ENCODE measurements at regions of chr12 and their contacts with region 1.

Region 1: GRCh38 chr12:56189176-56189917 is at the start of gene SMARCC2:
- DNase-seq: peak; percentile 91
- H3K27ac ChIP-seq: peak within 1 kb of the TSS; percentile 96
- CTCF ChIP-seq: peak; percentile 99

Region 2: GRCh38 chr12:56117778-56118687 is 71.3 kb before region 1 on chr12 and contains the start of gene ZC3H10:
- CTCF ChIA-PET with region 1: interaction called, 36 read pairs
- POLR2A ChIA-PET with region 1: interaction called, 3 read pairs
- DNase-seq: peak; percentile 96
- H3K27ac ChIP-seq: peak within 1 kb of the TSS; percentile 92
- CTCF ChIP-seq: peak; percentile 50

Region 3: DNA sequence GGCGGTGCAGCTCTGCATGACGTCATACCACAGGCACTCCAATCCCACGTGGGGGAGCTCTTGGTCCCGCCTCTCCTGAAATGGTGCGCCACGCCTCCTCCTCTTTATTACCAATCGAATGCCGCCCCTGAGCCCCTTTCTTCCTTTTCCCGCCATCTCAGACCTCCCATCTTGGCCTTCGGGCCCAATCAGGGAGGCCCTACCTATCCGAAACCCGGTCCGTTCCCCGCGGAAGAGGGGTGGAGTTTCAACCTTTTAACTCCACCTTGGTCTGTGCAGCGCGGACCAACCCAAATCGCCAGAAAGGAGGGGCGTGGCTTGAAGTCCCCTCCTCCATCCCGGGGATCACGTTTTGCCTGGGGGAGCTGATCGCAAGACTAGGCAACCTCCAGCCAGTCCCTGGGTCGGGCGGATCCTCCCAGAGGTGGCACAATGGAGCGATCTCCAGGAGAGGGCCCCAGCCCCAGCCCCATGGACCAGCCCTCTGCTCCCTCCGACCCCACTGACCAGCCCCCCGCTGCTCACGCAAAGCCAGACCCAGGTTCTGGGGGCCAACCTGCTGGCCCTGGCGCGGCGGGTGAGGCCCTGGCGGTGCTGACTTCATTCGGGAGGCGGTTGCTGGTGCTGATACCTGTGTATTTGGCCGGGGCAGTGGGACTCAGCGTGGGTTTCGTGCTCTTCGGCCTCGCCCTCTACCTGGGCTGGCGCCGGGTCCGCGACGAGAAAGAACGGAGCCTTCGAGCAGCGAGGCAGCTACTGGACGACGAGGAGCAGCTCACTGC is 61.3 kb before region 1 on chr12 and contains the start of gene ESYT1:
- CTCF ChIA-PET with region 1: interaction called, 21 read pairs
- POLR2A ChIA-PET with region 1: interaction called, 4 read pairs
- DNase-seq: peak; percentile 99
- H3K27ac ChIP-seq: peak within 1 kb of the TSS; percentile 91
- CTCF ChIP-seq: no peak

Region 4: DNA sequence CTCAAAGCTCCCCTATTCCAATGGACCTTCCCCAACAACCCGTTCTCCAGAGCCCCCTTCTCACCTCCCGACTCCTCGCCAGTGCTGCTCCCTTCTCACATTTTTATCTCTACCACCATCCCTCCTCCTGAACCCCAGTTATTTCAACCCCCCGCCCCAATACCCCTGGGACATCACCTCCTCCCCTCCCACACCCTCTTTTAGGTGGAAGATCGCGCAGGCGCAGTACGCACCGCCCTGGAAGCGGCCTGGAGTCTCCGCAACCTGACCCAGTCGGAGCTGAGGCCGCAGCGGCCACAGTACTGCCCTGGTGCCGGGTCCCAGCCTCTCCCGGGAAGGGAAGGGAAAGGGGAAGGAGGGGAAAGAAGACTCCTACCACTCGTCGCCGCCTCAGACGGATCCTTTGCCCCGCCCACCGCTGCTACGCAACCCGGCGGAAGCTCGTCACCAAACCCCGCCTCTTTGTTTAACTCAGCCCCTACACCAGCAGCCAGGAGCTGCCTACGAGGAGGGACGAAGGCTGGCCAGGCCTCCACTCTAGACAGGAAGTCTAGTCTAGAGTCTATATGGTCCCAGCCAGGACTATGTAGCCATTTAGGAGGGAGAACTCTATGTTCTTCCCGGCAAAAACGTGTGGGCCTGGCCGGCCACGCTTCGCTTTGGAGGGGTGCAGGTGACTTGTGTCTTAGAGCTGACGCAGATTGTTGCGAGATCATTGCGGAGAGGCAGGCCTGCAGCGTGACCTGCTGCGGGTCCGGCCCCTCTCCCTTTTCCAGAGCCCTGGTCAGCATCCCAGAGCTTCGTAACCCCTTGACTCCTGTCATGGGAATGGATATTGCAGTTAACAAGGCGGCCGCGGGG is 32.4 kb after region 1 on chr12 and contains the start of gene RNF41:
- CTCF ChIA-PET with region 1: interaction called, 11 read pairs
- POLR2A ChIA-PET with region 1: interaction called, 4 read pairs
- DNase-seq: peak; percentile 98
- H3K27ac ChIP-seq: peak within 1 kb of the TSS; percentile 97
- CTCF ChIP-seq: no peak

Region 5: DNA sequence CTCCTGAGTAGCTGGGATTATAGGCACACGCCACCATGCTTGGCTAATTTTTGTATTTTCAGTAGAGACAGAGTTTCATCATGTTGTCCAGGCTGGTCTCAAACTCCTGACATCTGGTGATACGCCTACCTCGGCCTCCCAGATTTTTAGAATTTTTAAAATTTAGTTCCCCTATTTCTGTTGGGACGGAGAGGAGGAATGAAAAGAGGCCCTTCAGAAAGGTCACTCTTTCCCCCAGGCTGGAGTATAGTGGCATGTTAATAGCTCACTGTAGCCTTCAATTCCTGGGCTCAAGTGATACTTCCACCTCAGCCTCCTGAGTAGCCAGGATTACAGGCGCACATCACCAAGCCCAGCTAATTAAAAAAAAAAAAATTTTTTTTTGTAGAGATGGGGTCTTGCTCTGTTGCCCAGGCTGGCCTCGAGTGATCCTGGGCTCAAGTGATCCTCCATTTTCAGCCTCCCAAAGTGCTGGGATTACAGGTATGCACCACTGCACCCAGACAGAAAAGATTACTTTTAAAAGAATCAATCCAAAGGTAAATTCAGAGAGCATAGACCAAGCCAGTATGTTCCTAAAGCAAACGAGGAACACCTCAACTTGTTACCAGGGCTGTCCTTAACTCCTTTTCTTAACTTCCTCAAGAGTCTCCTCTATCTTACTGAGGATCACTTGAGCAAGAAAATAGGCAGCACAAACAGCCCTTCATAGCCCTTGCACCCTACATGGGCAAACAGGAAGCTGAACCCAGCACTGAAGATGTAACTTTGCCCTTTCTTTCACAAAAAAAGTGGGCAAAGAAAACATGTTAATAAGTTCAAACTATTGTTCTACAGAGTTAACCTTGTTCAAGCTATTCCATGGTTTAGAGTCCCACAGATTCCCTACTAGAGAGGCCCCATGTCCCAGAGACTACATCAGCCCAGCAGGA is 99.4 kb after region 1 on chr12:
- CTCF ChIA-PET with region 1: no interaction called
- POLR2A ChIA-PET with region 1: no interaction called
- DNase-seq: no peak
- H3K27ac ChIP-seq: no peak overlapping the region
- CTCF ChIP-seq: no peak

Region 6: GRCh38 chr12:56622535-56622934 is 433.2 kb after region 1 on chr12:
- CTCF ChIA-PET with region 1: no interaction called
- POLR2A ChIA-PET with region 1: no interaction called
- DNase-seq: no peak
- H3K27ac ChIP-seq: no peak overlapping the region; the same call in 1 of the 2 replicates
- CTCF ChIP-seq: no peak